Mammary epithelial cell (primary cell): ENCODE measurements at regions of chr10 and their contacts with region 1.

Region 1: DNA sequence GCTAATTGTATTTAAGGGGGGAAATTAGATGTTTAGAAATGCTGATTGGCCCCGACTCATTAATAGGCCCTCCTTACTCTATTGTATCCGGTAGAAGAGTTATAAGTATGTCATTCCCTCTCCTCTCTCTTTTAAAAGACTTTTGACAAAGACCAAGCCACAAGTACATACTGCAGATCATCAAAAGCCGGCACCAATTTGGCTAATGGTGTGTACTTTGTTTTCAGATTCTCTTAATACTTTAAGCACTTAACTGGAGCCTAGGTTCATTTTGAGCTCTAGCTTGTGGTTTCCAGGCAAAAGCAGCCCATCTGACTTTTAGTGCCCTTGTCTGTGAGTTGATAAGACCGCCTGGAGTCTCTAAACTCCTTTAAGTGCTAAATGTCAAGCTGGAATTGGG is 210.0 kb upstream of the LYZL1 start:
- DNase-seq: no peak
- H3K4me3 ChIP-seq: no peak overlapping the region
- H3K27ac ChIP-seq: no peak overlapping the region
- H3K4me1 ChIP-seq: no peaks in the 10 kb centered on the region
- H3K27me3 ChIP-seq: no peaks in the 10 kb centered on the region
- CTCF ChIP-seq: no peak

Region 2: GRCh38 chr10:28778524-28778923 is 300.4 kb before region 1 on chr10:
- CTCF ChIA-PET with region 1: no interaction called
- dilution Hi-C with region 1: no loop called
- in situ Hi-C with region 1: no loop called
- intact Hi-C with region 1: no loop called
- DNase-seq: no peak
- H3K4me3 ChIP-seq: no peak overlapping the region
- H3K27ac ChIP-seq: no peak overlapping the region
- H3K4me1 ChIP-seq: no peaks in the 10 kb centered on the region
- H3K27me3 ChIP-seq: no peaks in the 10 kb centered on the region
- CTCF ChIP-seq: no peak

Region 3: DNA sequence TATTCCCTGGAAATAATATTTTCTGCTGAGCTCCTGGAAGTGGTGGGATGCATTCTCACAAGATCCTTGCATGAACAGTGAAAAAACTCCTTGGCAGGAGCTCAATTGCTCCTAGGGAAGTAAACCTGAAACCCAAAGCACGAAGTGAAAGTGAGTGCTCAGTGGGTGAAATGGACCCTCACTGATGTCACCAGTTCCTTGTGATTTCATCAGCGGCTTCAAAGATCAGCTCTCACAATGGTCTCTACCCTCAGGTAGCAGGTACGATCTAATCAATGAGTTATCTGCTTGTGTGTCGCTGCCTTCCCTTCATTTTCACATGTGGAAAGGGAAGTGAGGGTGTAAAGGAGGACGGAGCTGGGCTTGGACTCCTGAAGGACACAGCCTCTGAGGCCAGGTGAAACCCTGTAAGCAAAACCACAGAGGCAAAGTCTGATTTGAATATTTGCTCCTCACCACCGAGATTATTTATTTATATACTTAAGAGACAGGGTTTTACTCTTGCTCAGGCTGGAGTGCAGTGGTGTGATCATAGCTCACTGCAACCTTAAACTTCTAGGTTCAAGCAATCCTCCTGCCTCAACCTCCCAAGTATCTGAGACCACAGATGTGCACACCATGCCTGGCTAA is 45.5 kb before region 1 on chr10:
- CTCF ChIA-PET with region 1: no interaction called
- dilution Hi-C with region 1: no loop called
- in situ Hi-C with region 1: no loop called
- intact Hi-C with region 1: loop called (anchors 1 kb)
- DNase-seq: no peak
- H3K4me3 ChIP-seq: no peak overlapping the region
- H3K27ac ChIP-seq: no peak overlapping the region
- H3K4me1 ChIP-seq: no peaks in the 10 kb centered on the region
- H3K27me3 ChIP-seq: peaks cover 2% of the 10 kb centered on the region
- CTCF ChIP-seq: no peak

Region 4: DNA sequence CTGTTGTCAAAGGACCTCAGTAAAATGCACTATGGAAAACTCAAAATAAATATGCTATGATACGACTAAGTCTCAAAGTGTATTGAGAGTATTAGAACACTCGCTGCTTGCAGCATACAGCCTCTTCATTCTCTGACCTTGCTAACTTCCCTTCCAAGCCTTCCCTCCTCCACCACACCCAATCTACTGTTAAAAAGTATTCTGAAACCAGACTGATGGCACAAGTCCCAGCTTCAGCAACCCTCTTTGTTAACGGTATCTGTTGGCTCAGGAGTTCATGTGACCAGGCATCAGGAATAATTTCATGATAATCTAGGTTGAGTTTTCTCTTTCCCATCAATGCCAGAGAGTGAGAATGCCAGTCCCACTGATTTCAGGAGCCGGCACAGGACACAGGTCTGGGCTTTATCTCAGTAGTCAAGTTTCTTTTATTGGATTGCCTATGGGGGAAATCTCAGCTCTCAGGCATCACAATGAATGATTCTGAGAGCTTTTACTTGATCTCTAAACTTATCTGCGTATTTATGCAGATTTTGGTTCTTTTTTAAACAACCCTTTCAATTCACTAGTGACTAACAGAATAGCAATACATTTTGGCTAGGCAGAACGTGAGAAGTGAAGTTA is 21.1 kb before region 1 on chr10:
- CTCF ChIA-PET with region 1: no interaction called
- dilution Hi-C with region 1: no loop called
- in situ Hi-C with region 1: no loop called
- intact Hi-C with region 1: no loop called
- DNase-seq: no peak
- H3K4me3 ChIP-seq: no peak overlapping the region
- H3K27ac ChIP-seq: no peak overlapping the region
- H3K4me1 ChIP-seq: no peaks in the 10 kb centered on the region
- H3K27me3 ChIP-seq: no peaks in the 10 kb centered on the region
- CTCF ChIP-seq: no peak